Caco-2 (cell line): ENCODE measurements at regions of chr14 and their contacts with region 1.

Region 1: DNA sequence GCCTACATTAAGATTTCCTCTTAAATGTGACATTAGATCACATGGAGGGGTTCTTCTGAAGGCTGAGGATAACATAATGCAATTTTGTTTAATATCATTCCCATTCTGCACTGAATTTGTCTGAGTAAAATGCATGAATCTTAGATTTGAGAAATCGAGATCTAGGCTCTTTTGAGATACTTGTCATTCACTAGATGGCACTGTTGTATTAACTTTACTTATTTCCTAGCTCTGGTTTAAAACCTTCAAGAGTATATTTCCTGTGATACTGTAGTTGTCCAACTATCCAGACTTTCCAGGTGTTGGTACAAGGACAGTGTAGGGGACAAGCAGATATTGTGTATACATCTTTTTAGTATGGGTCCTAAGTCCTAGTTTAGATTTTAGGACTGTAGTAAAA is 91.7 kb upstream of the SEL1L start:
- DNase-seq: peak in 1 of 2 experiments; percentile 5
- H3K4me3 ChIP-seq: no peak overlapping the region
- H3K4me3 Mint-ChIP-seq: no peak overlapping the region
- H3K27ac Mint-ChIP-seq: no peak overlapping the region
- H3K4me1 ChIP-seq: no peaks in the 10 kb centered on the region
- H3K4me1 Mint-ChIP-seq: no peaks in the 10 kb centered on the region
- H3K27me3 ChIP-seq: no peaks in the 10 kb centered on the region
- H3K27me3 Mint-ChIP-seq: peaks cover 13% of the 10 kb centered on the region
- CTCF ChIP-seq: peak; percentile 25 to 44

Region 2: DNA sequence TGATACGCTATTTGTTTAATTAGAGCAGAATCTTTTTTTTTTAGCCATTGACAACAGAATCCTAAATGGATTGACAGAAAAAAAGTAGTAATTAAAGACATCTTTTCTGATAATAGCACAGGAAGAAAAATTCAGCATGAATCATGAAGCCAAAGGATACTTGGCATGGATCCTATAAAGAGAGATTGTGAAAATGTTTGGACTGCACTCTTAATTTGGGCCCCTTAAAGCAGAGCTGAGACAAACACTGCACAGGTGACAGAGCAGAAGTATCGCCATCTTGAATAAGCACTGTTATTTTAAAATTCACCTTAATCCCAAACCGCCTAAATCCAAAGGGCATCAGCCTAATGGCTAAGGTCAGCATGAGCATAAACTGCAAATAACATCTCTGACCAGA is 42.9 kb before region 1 on chr14:
- CTCF ChIA-PET with region 1: no interaction called
- POLR2A ChIA-PET with region 1: no interaction called
- intact Hi-C with region 1: no loop called
- DNase-seq: no peak
- H3K4me3 ChIP-seq: no peak overlapping the region
- H3K4me3 Mint-ChIP-seq: no peak overlapping the region
- H3K27ac Mint-ChIP-seq: peak overlapping the region; percentile 46
- H3K4me1 ChIP-seq: peaks cover 15% of the 10 kb centered on the region
- H3K4me1 Mint-ChIP-seq: peaks cover 21% of the 10 kb centered on the region
- H3K27me3 ChIP-seq: no peaks in the 10 kb centered on the region
- H3K27me3 Mint-ChIP-seq: no peaks in the 10 kb centered on the region
- CTCF ChIP-seq: no peak

Region 3: GRCh38 chr14:81710234-81710845 is 85.0 kb after region 1 on chr14:
- CTCF ChIA-PET with region 1: interaction called, 11 read pairs
- POLR2A ChIA-PET with region 1: no interaction called
- intact Hi-C with region 1: loop called (anchors 2 kb)
- DNase-seq: peak in 1 of 2 experiments; percentile 57
- H3K4me3 ChIP-seq: no peak overlapping the region
- H3K4me3 Mint-ChIP-seq: no peak overlapping the region
- H3K27ac Mint-ChIP-seq: no peak overlapping the region
- H3K4me1 ChIP-seq: no peaks in the 10 kb centered on the region
- H3K4me1 Mint-ChIP-seq: no peaks in the 10 kb centered on the region
- H3K27me3 ChIP-seq: no peaks in the 10 kb centered on the region
- H3K27me3 Mint-ChIP-seq: peaks cover 3% of the 10 kb centered on the region
- CTCF ChIP-seq: peak; percentile 55 to 56

Region 4: DNA sequence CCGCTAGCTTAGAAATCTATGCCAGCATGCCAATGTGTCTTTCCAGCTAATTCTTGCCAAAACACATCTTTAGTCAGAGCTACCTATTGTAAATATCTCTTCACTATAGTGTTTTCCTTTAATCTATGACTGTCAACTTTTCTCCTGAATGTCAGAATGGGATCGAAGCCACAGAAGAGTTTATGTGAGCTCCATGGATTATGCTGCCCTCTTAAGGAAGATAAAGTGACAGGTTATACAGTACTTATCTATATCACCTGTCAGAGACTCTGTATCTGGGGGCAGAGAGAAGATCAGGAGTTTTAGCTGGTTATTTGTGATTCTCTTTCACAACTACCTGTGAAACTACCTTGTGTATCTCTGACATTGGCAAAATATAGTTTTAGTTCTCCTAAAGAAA is 112.6 kb after region 1 on chr14:
- CTCF ChIA-PET with region 1: interaction called, 7 read pairs
- POLR2A ChIA-PET with region 1: interaction called, 5 read pairs
- intact Hi-C with region 1: loop called (anchors 1 kb)
- DNase-seq: no peak
- H3K4me3 ChIP-seq: no peak overlapping the region
- H3K4me3 Mint-ChIP-seq: no peak overlapping the region
- H3K27ac Mint-ChIP-seq: no peak overlapping the region
- H3K4me1 ChIP-seq: no peaks in the 10 kb centered on the region
- H3K4me1 Mint-ChIP-seq: no peaks in the 10 kb centered on the region
- H3K27me3 ChIP-seq: no peaks in the 10 kb centered on the region
- H3K27me3 Mint-ChIP-seq: peaks cover 3% of the 10 kb centered on the region
- CTCF ChIP-seq: peak in 1 of 2 experiments; percentile 15

Region 5: DNA sequence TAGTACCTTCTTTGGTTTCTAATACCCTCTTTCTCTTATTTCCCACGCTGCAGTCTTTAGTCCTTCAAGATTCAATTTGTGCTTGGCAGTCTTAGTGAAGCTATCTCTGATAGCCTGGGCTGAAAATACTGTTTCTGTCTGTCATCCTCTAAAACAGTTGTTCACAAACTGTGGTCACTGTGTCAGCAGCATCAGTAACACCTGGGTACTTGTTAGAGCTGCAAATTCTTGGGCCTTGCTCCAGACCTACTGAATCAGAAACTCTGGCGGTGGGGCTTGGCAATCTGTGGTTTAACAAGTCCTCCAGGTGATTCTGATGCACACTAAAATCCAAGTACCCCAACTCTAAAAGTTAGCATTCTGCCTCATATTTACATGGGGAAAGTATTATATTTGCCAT is 125.9 kb after region 1 on chr14:
- CTCF ChIA-PET with region 1: no interaction called
- POLR2A ChIA-PET with region 1: no interaction called
- intact Hi-C with region 1: no loop called
- DNase-seq: no peak
- H3K4me3 ChIP-seq: no peak overlapping the region
- H3K4me3 Mint-ChIP-seq: no peak overlapping the region
- H3K27ac Mint-ChIP-seq: no peak overlapping the region
- H3K4me1 ChIP-seq: no peaks in the 10 kb centered on the region
- H3K4me1 Mint-ChIP-seq: no peaks in the 10 kb centered on the region
- H3K27me3 ChIP-seq: no peaks in the 10 kb centered on the region
- H3K27me3 Mint-ChIP-seq: peaks cover 3% of the 10 kb centered on the region
- CTCF ChIP-seq: no peak

Region 6: DNA sequence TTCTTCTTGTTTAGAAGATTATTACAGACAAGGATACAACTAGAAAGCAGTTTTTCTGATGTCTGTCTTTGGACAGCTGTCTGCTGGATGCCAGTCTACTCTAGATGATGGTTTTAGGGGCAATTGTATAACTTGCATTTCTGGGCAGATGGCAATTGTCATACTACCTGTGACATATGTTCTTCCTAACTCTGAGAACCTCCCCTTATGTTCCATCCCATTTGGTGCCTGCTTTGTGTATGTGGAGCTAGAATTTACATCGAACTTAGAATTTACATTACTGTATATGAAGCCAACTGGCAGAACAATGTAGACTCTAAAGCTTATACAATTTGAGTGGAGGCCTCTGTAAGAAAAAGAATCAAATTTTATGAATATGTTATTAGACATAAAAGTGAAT is 338.5 kb after region 1 on chr14:
- CTCF ChIA-PET with region 1: no interaction called
- POLR2A ChIA-PET with region 1: no interaction called
- intact Hi-C with region 1: no loop called
- DNase-seq: no peak
- H3K4me3 ChIP-seq: no peak overlapping the region
- H3K4me3 Mint-ChIP-seq: no peak overlapping the region
- H3K27ac Mint-ChIP-seq: no peak overlapping the region
- H3K4me1 ChIP-seq: no peaks in the 10 kb centered on the region
- H3K4me1 Mint-ChIP-seq: no peaks in the 10 kb centered on the region
- H3K27me3 ChIP-seq: no peaks in the 10 kb centered on the region
- H3K27me3 Mint-ChIP-seq: no peaks in the 10 kb centered on the region
- CTCF ChIP-seq: no peak

Region 7: DNA sequence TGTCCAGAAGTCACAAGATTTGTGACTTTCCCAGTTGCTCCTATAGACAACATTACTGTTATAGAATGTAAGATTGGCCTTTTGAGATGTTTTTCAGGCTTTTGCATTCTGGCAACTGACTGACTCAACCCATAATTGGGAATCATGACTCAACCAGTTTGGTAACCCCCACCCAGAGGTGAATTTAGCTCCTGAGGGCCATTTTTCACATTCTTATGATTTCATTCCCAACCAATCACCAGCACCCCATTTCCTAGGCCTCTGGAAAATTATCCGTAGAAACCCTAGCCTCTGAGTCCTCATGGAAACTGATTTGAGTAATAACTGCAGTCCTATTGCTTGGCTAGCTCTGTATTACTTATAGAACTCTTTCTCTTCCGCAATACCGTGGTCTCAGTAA is 534.3 kb after region 1 on chr14:
- CTCF ChIA-PET with region 1: no interaction called
- POLR2A ChIA-PET with region 1: no interaction called
- intact Hi-C with region 1: no loop called
- DNase-seq: no peak
- H3K4me3 ChIP-seq: no peak overlapping the region
- H3K4me3 Mint-ChIP-seq: no peak overlapping the region
- H3K27ac Mint-ChIP-seq: no peak overlapping the region
- H3K4me1 ChIP-seq: no peaks in the 10 kb centered on the region
- H3K4me1 Mint-ChIP-seq: no peaks in the 10 kb centered on the region
- H3K27me3 ChIP-seq: no peaks in the 10 kb centered on the region
- H3K27me3 Mint-ChIP-seq: no peaks in the 10 kb centered on the region
- CTCF ChIP-seq: no peak

Region 8: GRCh38 chr14:82366803-82367202 is 741.5 kb after region 1 on chr14:
- CTCF ChIA-PET with region 1: no interaction called
- POLR2A ChIA-PET with region 1: no interaction called
- intact Hi-C with region 1: loop called (anchors 5 kb)
- DNase-seq: peak in 1 of 2 experiments; percentile 26
- H3K4me3 ChIP-seq: no peak overlapping the region
- H3K4me3 Mint-ChIP-seq: no peak overlapping the region
- H3K27ac Mint-ChIP-seq: no peak overlapping the region
- H3K4me1 ChIP-seq: no peaks in the 10 kb centered on the region
- H3K4me1 Mint-ChIP-seq: no peaks in the 10 kb centered on the region
- H3K27me3 ChIP-seq: no peaks in the 10 kb centered on the region
- H3K27me3 Mint-ChIP-seq: no peaks in the 10 kb centered on the region
- CTCF ChIP-seq: peak; percentile 22 to 30